ENCODE measurements at regions of chr11 and their contacts with region 1.

Region 1: DNA sequence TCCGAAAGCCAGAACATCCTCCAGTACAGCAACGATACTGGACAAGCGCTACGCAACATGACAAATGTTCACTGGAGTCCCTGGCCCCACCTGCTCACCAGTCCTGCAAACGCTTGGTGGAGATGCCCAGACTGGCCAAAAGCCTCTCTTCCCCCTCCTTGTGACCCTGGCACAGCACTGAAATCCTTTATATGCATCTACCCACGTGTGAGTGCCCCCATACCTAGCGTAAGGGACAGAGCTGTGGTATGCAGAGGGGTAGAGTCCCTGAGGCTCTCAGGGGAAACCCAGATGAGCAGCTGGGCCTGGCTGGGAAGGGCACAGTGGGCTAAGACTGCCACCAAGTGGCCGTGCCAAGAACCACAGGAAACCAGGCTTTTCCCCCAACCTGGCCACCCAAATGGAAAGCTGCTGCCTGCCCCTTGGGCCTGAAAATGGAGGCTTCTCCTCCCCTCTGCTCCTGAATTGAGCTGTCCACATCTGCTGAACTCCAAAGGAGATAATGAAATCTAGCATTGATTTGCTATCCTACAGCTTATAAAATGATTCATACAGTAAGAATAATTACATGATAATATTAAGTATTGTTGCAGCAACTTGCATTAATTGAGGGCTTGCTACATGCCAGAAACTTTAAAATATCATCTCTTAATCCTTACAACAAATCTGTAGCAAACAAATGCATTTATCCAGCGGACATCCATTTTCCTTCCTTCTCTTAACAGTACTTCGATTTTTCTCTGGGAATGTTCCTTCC is 24.8 kb upstream of the TTC12 start:
- DNase-seq: peak; percentile 59
- H3K4me3 Mint-ChIP-seq: no peak overlapping the region
- H3K27ac Mint-ChIP-seq: no peak overlapping the region
- H3K4me1 Mint-ChIP-seq: peaks cover 9% of the 10 kb centered on the region
- H3K27me3 Mint-ChIP-seq: peaks cover 24% of the 10 kb centered on the region
- CTCF ChIP-seq: peak; percentile 61

Region 2: DNA sequence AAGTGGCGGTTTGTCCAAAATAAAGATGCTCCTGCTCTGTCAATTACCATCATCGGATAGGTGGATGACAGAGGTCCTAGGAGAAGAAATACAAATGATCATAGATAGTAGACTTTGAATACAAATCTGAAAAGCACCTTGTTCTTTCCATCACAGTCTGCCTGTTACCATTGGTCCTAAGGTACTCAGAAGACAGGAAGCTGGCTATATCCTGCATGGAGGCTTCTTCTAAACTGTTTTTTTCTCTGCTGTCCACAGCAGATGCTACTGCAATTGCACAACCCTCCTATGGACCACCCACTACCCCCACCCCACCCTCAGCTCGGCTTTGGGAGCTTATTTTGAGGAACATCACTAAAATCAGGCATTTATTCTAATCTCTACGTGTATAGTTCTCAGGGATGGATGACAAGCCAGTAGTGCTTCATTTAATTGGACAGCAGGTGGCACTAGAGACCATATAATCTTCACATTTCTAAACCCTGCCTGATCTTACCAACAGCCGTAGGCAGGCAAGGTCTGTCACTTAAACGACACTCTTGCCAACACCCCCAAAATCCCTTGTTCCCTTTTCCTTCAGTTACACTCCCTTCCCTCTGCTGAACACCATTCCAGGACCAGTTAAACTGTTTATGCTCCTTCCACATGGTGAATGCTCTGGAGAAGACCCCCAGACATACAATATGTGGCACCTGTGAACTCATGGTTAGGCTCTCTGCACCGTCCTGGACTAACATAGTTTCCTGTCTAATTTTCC is 1070.0 kb before region 1 on chr11:
- CTCF ChIA-PET with region 1: interaction called, 3 read pairs
- intact Hi-C with region 1: loop called (anchors 5 kb)
- DNase-seq: peak; percentile 33
- H3K4me3 Mint-ChIP-seq: no peak overlapping the region
- H3K27ac Mint-ChIP-seq: no peak overlapping the region
- H3K4me1 Mint-ChIP-seq: peaks cover 8% of the 10 kb centered on the region
- H3K27me3 Mint-ChIP-seq: no peaks in the 10 kb centered on the region
- CTCF ChIP-seq: peak; percentile 44

Region 3: DNA sequence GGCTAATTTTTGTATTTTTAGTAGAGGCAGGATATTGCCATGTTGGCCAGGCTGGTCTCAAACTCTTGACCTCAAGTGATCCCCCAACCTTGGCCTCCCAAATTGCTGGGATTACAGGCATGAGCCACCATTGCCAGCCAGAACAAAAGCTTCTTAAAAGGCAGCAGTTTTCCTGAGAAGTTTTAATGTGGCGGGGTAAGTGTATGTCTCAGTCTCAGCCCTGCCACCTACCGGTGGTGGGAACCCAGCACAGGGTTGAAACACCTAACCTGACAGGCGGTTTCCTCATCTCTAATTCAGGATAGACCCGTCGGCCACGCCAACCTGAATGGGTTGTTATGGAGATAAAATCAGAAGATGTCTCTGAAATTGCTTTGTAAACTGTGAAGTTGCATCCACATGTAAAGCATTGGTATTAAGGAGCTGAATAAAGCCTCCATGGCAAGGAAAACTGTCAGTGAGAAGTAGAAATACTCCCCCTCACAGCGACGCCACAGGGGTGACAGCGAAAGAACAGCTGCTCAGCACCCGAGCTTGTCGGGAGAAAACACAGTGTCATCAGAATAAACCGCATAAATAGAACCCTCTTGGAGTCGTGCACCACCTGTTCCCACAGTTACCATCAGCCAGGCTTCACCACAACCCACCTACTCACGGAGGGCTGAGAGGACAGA is 494.3 kb before region 1 on chr11:
- CTCF ChIA-PET with region 1: interaction called, 3 read pairs
- intact Hi-C with region 1: loop called (anchors 10 kb)
- DNase-seq: peak; percentile 70
- H3K4me3 Mint-ChIP-seq: no peak overlapping the region
- H3K27ac Mint-ChIP-seq: no peak overlapping the region
- H3K4me1 Mint-ChIP-seq: peaks cover 9% of the 10 kb centered on the region
- H3K27me3 Mint-ChIP-seq: no peaks in the 10 kb centered on the region
- CTCF ChIP-seq: no peak

Region 4: DNA sequence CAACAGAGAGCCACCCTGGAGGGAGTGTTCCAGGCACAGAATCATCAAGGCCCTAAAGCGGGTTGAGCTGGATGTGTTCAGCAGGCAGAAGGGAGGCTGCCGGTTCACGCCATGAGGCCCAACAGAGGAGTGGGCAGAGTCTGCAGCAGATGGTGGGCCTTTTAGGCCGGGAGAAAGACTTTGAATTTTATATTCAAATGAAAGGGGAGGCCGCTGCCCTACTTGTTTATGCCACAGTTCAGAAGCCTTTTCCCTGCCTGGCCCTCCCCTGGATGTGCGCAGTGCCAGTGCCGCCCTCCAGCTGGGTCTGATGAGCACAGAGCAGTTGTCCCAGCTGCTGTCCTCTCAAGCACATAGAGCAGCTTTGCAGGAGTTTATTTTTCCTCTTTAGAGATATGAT is 22.1 kb before region 1 on chr11:
- CTCF ChIA-PET with region 1: no interaction called
- intact Hi-C with region 1: no loop called
- DNase-seq: no peak
- H3K4me3 Mint-ChIP-seq: no peak overlapping the region
- H3K27ac Mint-ChIP-seq: no peak overlapping the region
- H3K4me1 Mint-ChIP-seq: no peaks in the 10 kb centered on the region
- H3K27me3 Mint-ChIP-seq: peaks cover 54% of the 10 kb centered on the region
- CTCF ChIP-seq: no peak